ENCODE measurements at regions of chr1 and their contacts with region 1.

Region 1: DNA sequence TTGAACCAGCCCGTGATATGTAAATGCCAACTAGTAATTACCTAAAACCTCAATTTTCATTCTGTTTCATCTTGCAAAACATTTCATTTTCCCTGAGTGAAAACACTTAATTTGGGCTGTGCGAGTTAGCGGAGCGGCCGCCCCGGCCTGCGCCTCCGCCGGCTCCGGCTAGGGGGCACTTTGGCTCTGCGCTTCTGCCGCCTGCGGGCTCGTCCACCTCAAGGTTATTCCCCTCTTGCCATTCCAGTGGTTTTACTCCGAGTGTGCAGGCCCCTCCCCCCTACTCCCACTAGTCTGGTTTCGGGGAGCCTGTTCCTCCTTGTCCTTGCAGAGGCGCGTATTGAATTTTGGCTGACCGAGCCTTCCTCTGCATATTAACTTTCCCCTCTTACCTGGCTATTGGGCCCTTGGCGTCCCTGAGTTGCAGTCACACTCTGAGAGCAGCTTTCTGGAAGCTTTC is 55.6 kb downstream of the PEX14 start:
- DNase-seq: peak; percentile 38 to 80 (median 79)
- ATAC-seq: peak; percentile 63 to 74
- H3K4me3 ChIP-seq: no peak overlapping the region
- H3K27ac ChIP-seq: no peak overlapping the region
- H3K4me1 ChIP-seq: peaks cover 12% of the 10 kb centered on the region
- H3K27me3 ChIP-seq: no peaks in the 10 kb centered on the region

Region 2: DNA sequence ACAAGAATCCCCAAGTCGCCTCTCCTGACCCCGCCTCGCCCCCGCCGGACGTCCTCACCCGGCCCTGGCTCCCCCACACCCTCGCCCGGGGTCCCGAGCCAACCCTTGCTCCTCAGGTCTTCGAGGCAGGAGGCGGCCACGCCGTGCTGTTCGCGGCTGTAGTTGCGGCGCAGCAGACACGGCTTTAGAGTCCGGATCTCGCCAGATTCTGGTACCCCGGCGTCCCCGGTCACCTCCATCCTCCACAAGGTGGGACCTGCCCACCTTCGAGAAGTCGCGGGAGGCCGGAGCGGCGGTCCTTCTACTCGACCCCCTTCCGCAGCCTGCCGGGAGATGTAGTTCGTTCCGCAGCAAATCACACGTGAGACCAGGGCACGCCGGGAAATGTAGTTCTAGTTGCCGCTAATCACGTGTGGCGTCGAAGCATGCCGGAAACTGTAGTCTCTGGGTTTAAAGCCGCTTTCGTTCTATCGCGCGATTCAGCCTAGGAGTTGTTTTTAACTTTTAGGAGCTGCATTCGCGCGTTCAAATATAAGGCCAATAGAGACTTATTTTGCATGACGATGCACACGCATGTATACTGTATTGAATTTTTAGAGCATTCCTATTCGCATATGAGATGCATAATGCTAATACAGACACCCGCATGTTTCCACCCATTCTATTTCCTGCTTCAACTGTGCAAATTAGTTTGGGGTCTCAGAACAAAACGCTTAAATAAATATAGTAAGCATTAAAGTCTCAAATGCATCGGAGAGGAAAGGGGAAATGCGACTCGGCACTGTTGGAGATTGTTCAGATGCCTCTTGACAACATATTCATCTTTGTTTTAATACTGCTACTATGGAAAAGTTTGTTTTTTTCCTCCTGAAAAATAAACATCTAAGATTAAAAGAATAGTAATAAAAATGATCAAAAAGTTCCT is 57.8 kb before region 1 on chr1 and contains the start of gene DFFA:
- intact Hi-C with region 1: loop called in 1 of 4 experiments (anchors 10 kb)
- DNase-seq: peak; percentile 94 to 97 (median 95)
- ATAC-seq: peak; percentile 90 to 91
- H3K4me3 ChIP-seq: peak within 1 kb of the TSS; percentile 74
- H3K27ac ChIP-seq: peak within 1 kb of the TSS; percentile 70
- H3K4me1 ChIP-seq: no peaks in the 10 kb centered on the region
- H3K27me3 ChIP-seq: no peaks in the 10 kb centered on the region
- total RNA-seq, gene DFFA: 25.8 to 31.3 (median 28.9) TPM